ENCODE measurements at regions of chr3 and their contacts with region 1.

Region 1: DNA sequence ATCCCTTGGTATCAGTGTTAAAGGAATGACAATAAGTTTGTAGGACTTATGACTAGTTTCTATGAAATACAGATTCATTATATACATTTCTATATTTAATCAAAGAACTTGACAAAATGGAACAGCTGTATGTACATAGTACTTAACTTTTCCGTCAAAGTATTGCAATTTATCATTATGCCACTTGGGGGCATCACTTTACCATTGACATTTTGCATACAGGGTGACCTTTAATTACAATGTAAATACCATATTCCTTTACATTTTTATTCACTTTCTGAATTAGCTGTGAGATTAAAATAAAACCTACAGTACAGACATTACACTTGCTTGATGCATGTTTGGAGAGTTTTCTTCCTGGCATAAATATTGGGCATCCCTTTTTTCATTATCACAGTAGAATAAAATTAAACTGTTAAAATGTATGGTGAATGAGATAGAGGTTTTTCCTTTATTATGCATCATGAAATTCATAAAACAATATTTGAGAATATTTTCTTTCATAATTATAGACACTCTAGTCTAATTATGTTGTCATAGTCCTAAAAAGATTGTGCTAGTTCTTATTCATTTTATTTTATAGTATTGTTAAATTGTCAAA is 6.9 kb downstream of the NEK11 start:
- DNase-seq: peak in 1 of 2 experiments; percentile 62
- H3K4me3 ChIP-seq: no peak overlapping the region
- H3K4me3 Mint-ChIP-seq: no peak overlapping the region
- H3K27ac Mint-ChIP-seq: no peak overlapping the region
- H3K4me1 ChIP-seq: peaks cover 3% of the 10 kb centered on the region; the same call in 1 of the 2 replicates
- H3K4me1 Mint-ChIP-seq: peaks cover 18% of the 10 kb centered on the region
- H3K27me3 ChIP-seq: no peaks in the 10 kb centered on the region
- H3K27me3 Mint-ChIP-seq: no peaks in the 10 kb centered on the region
- CTCF ChIP-seq: peak; percentile 43 to 59

Region 2: GRCh38 chr3:130323503-130323902 is 710.1 kb before region 1 on chr3:
- CTCF ChIA-PET with region 1: no interaction called
- POLR2A ChIA-PET with region 1: no interaction called
- intact Hi-C with region 1: no loop called
- DNase-seq: no peak
- H3K4me3 ChIP-seq: no peak overlapping the region
- H3K4me3 Mint-ChIP-seq: no peak overlapping the region
- H3K27ac Mint-ChIP-seq: no peak overlapping the region
- H3K4me1 ChIP-seq: no peaks in the 10 kb centered on the region
- H3K4me1 Mint-ChIP-seq: no peaks in the 10 kb centered on the region
- H3K27me3 ChIP-seq: no peaks in the 10 kb centered on the region
- H3K27me3 Mint-ChIP-seq: peaks cover 3% of the 10 kb centered on the region
- CTCF ChIP-seq: no peak

Region 3: DNA sequence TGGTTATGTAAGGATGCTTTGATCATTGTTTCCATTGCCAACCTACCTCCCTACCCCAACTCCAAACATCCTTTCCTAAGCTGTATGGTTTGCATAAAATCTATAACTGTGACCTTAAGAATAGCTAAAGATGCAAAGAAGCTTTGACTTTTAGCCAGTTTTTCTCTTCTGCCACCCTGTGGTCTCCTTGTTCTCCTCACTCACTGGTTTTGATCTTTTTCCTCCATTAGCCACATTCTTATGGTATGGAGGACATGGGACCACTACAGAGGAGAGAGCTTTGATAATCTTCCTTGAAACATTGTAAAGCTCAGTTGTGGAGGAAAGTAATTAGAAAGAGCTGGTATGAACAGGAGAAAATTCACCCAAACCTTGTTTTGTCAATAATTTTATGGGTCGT is 109.0 kb after region 1 on chr3:
- CTCF ChIA-PET with region 1: interaction called, 7 read pairs
- POLR2A ChIA-PET with region 1: no interaction called
- intact Hi-C with region 1: loop called (anchors 1 kb)
- DNase-seq: no peak
- H3K4me3 ChIP-seq: no peak overlapping the region
- H3K4me3 Mint-ChIP-seq: no peak overlapping the region
- H3K27ac Mint-ChIP-seq: no peak overlapping the region
- H3K4me1 ChIP-seq: no peaks in the 10 kb centered on the region
- H3K4me1 Mint-ChIP-seq: no peaks in the 10 kb centered on the region
- H3K27me3 ChIP-seq: no peaks in the 10 kb centered on the region
- H3K27me3 Mint-ChIP-seq: no peaks in the 10 kb centered on the region
- CTCF ChIP-seq: peak in 1 of 2 experiments; percentile 4

Region 4: GRCh38 chr3:131658108-131658507 is 624.5 kb after region 1 on chr3:
- CTCF ChIA-PET with region 1: no interaction called
- POLR2A ChIA-PET with region 1: no interaction called
- intact Hi-C with region 1: loop called (anchors 10 kb)
- DNase-seq: peak; percentile 21 to 39
- H3K4me3 ChIP-seq: no peak overlapping the region
- H3K4me3 Mint-ChIP-seq: no peak overlapping the region
- H3K27ac Mint-ChIP-seq: no peak overlapping the region
- H3K4me1 ChIP-seq: no peaks in the 10 kb centered on the region
- H3K4me1 Mint-ChIP-seq: no peaks in the 10 kb centered on the region
- H3K27me3 ChIP-seq: no peaks in the 10 kb centered on the region
- H3K27me3 Mint-ChIP-seq: peaks cover 13% of the 10 kb centered on the region
- CTCF ChIP-seq: peak in 1 of 2 experiments; percentile 51